Breast epithelium (tissue), 4 donors: ENCODE measurements at regions of chr1 and their contacts with region 1.

Region 1: DNA sequence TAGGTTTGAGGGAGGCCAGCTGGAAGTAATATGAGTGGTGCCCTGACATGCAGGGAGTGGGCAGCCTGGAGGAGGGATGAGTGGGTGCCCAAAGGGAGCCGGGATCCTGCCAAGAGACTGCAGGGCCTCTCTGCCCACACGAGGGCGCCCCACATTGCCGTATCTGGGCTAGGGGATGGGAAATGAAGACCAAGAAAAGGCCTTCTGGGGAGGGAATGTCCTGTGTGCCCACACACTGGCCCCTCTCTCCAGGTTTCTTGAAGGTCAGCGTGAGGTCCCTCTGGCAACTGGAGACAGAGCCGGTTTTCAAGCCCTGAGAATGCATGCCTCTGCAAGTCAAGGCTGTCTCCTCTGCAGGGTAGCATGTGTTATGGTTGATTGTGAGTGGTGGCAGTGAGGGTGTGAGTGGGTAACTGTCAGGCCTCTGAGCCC is 94.1 kb upstream of the PPM1J start:
- DNase-seq: peak; percentile 31 to 56
- H3K4me3 ChIP-seq: no peak overlapping the region
- H3K27ac ChIP-seq: no peak overlapping the region
- H3K4me1 ChIP-seq: no peaks in the 10 kb centered on the region
- H3K27me3 ChIP-seq: no peaks in the 10 kb centered on the region
- CTCF ChIP-seq: peak in 2 of 3 donors; percentile 47 to 49
- POLR2A ChIP-seq: no peak

Region 2: GRCh38 chr1:112715264-112716053 is 93.8 kb before region 1 on chr1 and contains the start of gene PPM1J:
- intact Hi-C with region 1: loop called (anchors 5 kb)
- DNase-seq: peak; percentile 97 to 98
- H3K4me3 ChIP-seq: peak within 1 kb of the TSS; percentile 49 to 89 (median 74)
- H3K27ac ChIP-seq: peak within 1 kb of the TSS; percentile 64 to 78
- H3K4me1 ChIP-seq: no peaks in the 10 kb centered on the region
- H3K27me3 ChIP-seq: no peaks in the 10 kb centered on the region
- CTCF ChIP-seq: no peak
- POLR2A ChIP-seq: no peak
- total RNA-seq, gene PPM1J: 0.32 to 5.3 (median 4.9) TPM